ENCODE measurements at regions of chr6 and their contacts with region 1.

Region 1: GRCh38 chr6:37207903-37208456 is 38.0 kb downstream of the PIM1 start:
- DNase-seq: peak; percentile 83
- H3K4me3 Mint-ChIP-seq: peak overlapping the region; percentile 37
- H3K27ac Mint-ChIP-seq: peak overlapping the region; percentile 86
- H3K4me1 Mint-ChIP-seq: peaks cover 61% of the 10 kb centered on the region
- H3K27me3 Mint-ChIP-seq: no peaks in the 10 kb centered on the region

Region 2: DNA sequence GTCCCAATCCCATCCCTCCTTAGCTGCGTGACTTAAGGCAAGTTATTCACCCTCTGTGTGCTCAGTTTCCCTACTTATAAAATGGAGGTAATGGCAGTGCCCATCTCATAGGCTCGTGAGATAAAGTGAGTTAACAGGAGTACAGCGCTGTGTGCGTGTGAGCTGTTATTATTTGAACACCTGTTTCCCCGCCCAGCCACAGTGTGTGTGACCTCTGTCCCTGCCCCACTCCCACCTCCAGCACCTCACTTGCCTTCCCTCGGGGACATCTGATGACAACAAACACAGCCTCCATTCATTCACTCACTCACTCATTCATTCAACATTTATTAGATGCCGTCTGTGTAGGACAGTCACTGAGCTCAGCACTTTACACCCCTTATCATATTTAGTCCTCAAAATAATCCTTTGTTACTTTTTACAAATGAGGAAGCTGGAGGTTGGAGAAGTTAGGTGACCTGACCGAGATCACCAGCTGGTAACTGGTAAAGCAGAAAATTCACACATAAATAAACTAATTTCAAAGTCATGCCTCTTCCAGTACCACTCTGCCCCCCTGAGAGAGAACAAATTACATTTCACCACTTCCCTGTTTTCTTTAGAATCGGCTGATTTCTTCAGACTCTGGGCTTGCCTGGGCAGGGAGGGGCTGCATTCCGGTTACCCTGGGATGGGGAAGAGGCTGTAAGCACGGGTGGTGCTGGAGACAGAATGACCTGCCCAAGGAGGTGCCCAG is 427.4 kb before region 1 on chr6:
- intact Hi-C with region 1: loop called (anchors 5 kb)
- DNase-seq: no peak
- H3K4me3 Mint-ChIP-seq: no peak overlapping the region
- H3K27ac Mint-ChIP-seq: no peak overlapping the region
- H3K4me1 Mint-ChIP-seq: peaks cover 6% of the 10 kb centered on the region
- H3K27me3 Mint-ChIP-seq: peaks cover 4% of the 10 kb centered on the region

Region 3: GRCh38 chr6:36979347-36979742 is 228.6 kb before region 1 on chr6:
- intact Hi-C with region 1: loop called (anchors 1 kb)
- DNase-seq: peak; percentile 21
- H3K4me3 Mint-ChIP-seq: no peak overlapping the region
- H3K27ac Mint-ChIP-seq: peak overlapping the region; percentile 54
- H3K4me1 Mint-ChIP-seq: peaks cover 32% of the 10 kb centered on the region
- H3K27me3 Mint-ChIP-seq: no peaks in the 10 kb centered on the region

Region 4: DNA sequence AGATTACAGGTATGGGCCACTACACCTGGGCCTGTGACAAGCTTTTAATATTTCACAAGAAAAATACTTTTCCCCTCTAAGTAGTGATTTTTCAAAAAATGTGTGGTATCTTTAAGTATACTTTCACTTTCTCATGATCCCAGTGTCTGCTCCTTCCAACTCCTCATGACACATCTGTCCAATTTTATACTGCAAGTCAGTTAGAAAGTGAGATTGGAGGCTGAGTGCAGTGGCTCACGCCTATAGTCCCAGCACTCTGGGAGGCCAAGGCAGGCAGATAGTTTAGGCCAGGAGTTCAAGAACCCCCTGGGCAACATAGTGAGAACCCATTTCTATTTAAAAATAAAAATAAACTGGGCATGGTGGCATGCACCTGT is 17.8 kb before region 1 on chr6:
- intact Hi-C with region 1: loop called (anchors 1 kb)
- DNase-seq: no peak
- H3K4me3 Mint-ChIP-seq: no peak overlapping the region
- H3K27ac Mint-ChIP-seq: peak overlapping the region; percentile 74
- H3K4me1 Mint-ChIP-seq: peaks cover 71% of the 10 kb centered on the region
- H3K27me3 Mint-ChIP-seq: no peaks in the 10 kb centered on the region

Region 5: DNA sequence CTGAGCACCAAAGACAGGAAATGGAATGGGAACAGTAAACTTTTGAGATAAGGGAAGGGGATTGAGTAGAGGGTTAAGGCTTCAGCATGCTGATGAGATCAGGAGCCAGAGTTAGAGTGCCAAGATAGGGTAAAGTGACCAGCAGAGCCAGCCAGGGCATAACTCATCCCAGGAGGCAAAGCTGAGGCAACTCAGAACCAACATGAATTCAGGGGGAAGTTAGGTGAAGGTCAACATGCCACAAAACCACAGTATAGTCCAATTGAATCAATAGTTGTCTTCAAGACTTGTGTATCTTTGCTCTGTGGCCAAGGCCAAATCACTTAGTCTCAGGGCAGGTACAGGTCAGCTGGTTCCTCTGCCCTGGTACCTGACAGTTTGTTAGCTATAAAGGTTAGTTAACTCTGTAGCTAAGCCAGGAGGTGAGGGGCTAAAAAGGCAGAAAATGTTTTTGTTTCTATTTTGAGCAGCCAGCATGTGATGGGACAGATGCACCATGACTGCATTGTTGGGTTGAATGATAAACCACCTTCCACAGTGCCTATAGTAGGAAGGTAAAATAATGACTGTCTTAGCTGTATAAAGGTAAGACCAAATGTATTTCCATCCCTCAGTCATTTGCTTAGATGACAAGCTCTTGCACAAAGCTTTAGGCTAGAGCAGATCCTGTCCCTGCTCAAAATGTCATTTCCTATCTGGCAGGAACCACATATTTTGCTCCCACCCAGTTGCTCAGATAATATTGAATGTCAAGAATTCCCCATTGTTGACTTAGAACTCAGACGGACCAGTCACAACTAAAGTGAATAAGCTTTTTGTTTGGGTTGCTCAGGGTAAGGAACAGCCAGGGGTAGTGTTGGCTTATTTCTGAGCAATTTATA is 161.6 kb after region 1 on chr6:
- intact Hi-C with region 1: no loop called
- DNase-seq: no peak
- H3K4me3 Mint-ChIP-seq: no peak overlapping the region
- H3K27ac Mint-ChIP-seq: peak overlapping the region; percentile 1
- H3K4me1 Mint-ChIP-seq: peaks cover 10% of the 10 kb centered on the region
- H3K27me3 Mint-ChIP-seq: no peaks in the 10 kb centered on the region

Region 6: GRCh38 chr6:37456816-37457560 is 249.0 kb after region 1 on chr6:
- intact Hi-C with region 1: no loop called
- DNase-seq: no peak
- H3K4me3 Mint-ChIP-seq: no peak overlapping the region
- H3K27ac Mint-ChIP-seq: peak overlapping the region; percentile 31
- H3K4me1 Mint-ChIP-seq: peaks cover 13% of the 10 kb centered on the region
- H3K27me3 Mint-ChIP-seq: no peaks in the 10 kb centered on the region